Calu3 (cell line): ENCODE measurements at regions of chr16 and their contacts with region 1.

Region 1: DNA sequence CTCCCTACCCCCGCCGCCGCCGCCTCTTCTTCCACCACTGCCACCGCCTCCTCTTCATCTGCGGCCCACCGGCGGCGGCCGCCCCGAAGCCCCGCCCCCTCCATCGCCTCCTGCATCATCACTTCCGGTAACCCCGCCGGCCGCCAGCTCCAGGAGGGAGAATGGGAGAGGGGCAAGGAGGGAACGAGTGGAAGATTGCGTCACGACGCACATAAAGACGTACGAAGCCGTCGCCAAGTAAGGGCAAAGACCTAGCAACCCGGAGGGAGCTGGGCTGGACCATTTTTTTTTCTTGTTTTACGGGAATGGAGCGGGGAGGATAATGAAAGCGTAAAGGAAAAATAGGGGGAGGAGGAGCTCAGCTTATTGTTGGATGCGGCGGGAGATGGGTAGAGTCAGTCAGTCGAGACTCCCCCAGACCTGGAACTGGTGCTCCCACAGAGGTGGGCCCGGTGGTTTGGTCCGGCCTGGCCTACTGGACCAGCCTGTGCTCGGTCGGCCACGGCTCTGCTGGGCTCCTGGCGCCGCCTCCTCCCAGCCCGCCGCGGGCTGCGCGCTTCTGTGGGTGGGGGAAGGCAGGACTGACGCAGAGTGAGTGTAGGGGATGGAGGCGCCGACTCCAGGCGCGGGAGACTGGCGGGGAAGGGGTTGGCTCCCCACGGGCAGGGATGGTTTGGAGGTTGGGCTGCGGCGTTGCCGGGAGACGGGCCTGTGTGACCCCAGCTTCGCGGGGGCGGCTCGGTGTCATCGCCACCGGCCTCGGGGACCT is at the starts of genes DCUN1D3 and LYRM1:
- DNase-seq: peak; percentile 96
- H3K4me3 Mint-ChIP-seq: peak within 1 kb of the TSS; percentile 75
- H3K27ac Mint-ChIP-seq: peak within 1 kb of the TSS; percentile 94
- H3K4me1 Mint-ChIP-seq: peaks cover 66% of the 10 kb centered on the region
- H3K27me3 Mint-ChIP-seq: no peaks in the 10 kb centered on the region
- CTCF ChIP-seq: no peak
- total RNA-seq, gene DCUN1D3: 17.0 and 21.0 TPM in 2 replicates
- total RNA-seq, gene LYRM1: 33.4 and 36.5 TPM in 2 replicates

Region 2: DNA sequence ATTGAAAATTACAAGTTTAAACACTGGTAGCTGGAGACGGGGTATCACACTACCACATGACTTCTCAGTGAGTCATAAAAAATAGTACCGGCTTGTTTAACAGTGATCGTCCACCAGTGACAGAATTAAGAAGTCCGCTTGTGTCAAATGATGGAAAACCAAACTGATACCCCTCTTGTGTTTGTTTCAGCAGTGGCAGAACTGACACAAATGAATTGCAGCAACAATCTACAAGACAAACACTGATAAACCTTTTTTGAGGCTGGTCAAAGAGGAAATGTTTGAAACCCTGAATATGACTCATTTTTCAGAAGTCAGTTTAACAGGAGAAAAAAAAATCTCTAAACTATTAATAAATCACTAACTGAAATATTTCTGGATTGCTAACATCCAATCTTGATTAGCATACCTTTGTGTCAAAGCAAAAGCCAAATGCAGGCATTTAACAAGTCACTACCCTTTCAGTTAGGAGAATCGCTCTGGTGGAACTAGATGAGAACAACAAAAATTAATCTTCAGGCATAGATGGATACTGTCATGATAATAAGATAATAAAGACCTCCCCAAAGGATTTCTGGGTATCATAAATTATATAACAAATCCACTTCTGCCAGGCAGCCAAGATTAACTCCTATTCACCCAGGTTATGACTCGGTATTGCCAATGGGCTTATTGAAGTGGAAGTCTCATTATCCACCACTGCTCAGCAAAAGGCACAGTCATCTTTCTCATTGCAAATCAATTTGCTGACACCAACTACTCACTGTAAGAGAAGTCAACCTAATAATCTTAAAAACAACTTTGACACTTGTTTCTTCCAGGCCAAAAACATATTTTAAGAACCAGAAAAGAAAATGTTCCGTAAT is 21.1 kb before region 1 on chr16:
- CTCF ChIA-PET with region 1: interaction called, 7 read pairs
- intact Hi-C with region 1: loop called (anchors 2 kb)
- DNase-seq: no peak
- H3K4me3 Mint-ChIP-seq: peak overlapping the region; percentile 56
- H3K27ac Mint-ChIP-seq: peak overlapping the region; percentile 69
- H3K4me1 Mint-ChIP-seq: peaks cover 71% of the 10 kb centered on the region
- H3K27me3 Mint-ChIP-seq: no peaks in the 10 kb centered on the region
- CTCF ChIP-seq: no peak